CD8-positive, alpha-beta T cell (primary cell): ENCODE measurements at regions of chr5 and their contacts with region 1.

Region 1: GRCh38 chr5:150357326-150358260 is at the start of gene TCOF1:
- DNase-seq: peak; percentile 93 to 99 (median 97)
- ATAC-seq: peak; percentile 99
- H3K4me3 ChIP-seq: peak within 1 kb of the TSS; percentile 62 to 74
- H3K4me3 Mint-ChIP-seq: peak within 1 kb of the TSS; percentile 82
- H3K27ac ChIP-seq: peak within 1 kb of the TSS; percentile 52 to 70
- H3K27ac Mint-ChIP-seq: peak within 1 kb of the TSS; percentile 87
- H3K4me1 ChIP-seq: peaks cover 18% of the 10 kb centered on the region
- H3K4me1 Mint-ChIP-seq: peaks cover 46% of the 10 kb centered on the region
- H3K27me3 ChIP-seq: no peaks in the 10 kb centered on the region
- H3K27me3 Mint-ChIP-seq: no peaks in the 10 kb centered on the region
- CTCF ChIP-seq: no peak
- total RNA-seq, gene TCOF1: 36.5 to 38.7 TPM

Region 2: GRCh38 chr5:149724130-149724840 is 633.3 kb before region 1 on chr5:
- CTCF ChIA-PET with region 1: no interaction called
- POLR2A ChIA-PET with region 1: no interaction called
- intact Hi-C with region 1: loop called in 1 of 2 experiments (anchors 10 kb)
- DNase-seq: peak in 2 of 9 experiments; percentile 18 to 57
- ATAC-seq: peak; percentile 85
- H3K4me3 ChIP-seq: no peak overlapping the region
- H3K4me3 Mint-ChIP-seq: no peak overlapping the region
- H3K27ac ChIP-seq: no peak overlapping the region
- H3K27ac Mint-ChIP-seq: no peak overlapping the region
- H3K4me1 ChIP-seq: peaks cover 7% of the 10 kb centered on the region
- H3K4me1 Mint-ChIP-seq: peaks cover 9% of the 10 kb centered on the region
- H3K27me3 ChIP-seq: no peaks in the 10 kb centered on the region
- H3K27me3 Mint-ChIP-seq: peaks cover 3% of the 10 kb centered on the region
- CTCF ChIP-seq: no peak

Region 3: GRCh38 chr5:150155258-150156026 is 202.2 kb before region 1 on chr5 and contains the start of gene PDGFRB:
- CTCF ChIA-PET with region 1: no interaction called
- POLR2A ChIA-PET with region 1: no interaction called
- intact Hi-C with region 1: loop called (anchors 2 to 10 kb)
- DNase-seq: peak; percentile 30 to 81 (median 65)
- ATAC-seq: peak; percentile 88
- H3K4me3 ChIP-seq: peak within 1 kb of the TSS; percentile 44 to 59
- H3K4me3 Mint-ChIP-seq: peak within 1 kb of the TSS; percentile 90
- H3K27ac ChIP-seq: peak within 1 kb of the TSS in 1 of 2 experiments; percentile 43
- H3K27ac Mint-ChIP-seq: peak within 1 kb of the TSS; percentile 46
- H3K4me1 ChIP-seq: peaks cover 11% of the 10 kb centered on the region
- H3K4me1 Mint-ChIP-seq: peaks cover 6% of the 10 kb centered on the region
- H3K27me3 ChIP-seq: no peaks in the 10 kb centered on the region
- H3K27me3 Mint-ChIP-seq: peaks cover 6% of the 10 kb centered on the region
- CTCF ChIP-seq: no peak
- total RNA-seq, gene PDGFRB: 0.05 TPM in 1 of 2 experiments, not detected in the other

Region 4: GRCh38 chr5:150449517-150450339 is 92.1 kb after region 1 on chr5 and contains the start of gene RPS14:
- CTCF ChIA-PET with region 1: no interaction called
- POLR2A ChIA-PET with region 1: interaction called, 3 read pairs
- intact Hi-C with region 1: loop called (anchors 1 kb)
- DNase-seq: peak; percentile 90 to 97 (median 95)
- ATAC-seq: peak; percentile 92
- H3K4me3 ChIP-seq: peak within 1 kb of the TSS; percentile 77 to 89
- H3K4me3 Mint-ChIP-seq: peak within 1 kb of the TSS; percentile 100
- H3K27ac ChIP-seq: peak within 1 kb of the TSS; percentile 93 to 98
- H3K27ac Mint-ChIP-seq: peak within 1 kb of the TSS; percentile 100
- H3K4me1 ChIP-seq: peaks cover 22% of the 10 kb centered on the region
- H3K4me1 Mint-ChIP-seq: peaks cover 36% of the 10 kb centered on the region
- H3K27me3 ChIP-seq: no peaks in the 10 kb centered on the region
- H3K27me3 Mint-ChIP-seq: no peaks in the 10 kb centered on the region
- CTCF ChIP-seq: peak; percentile 84
- total RNA-seq, gene RPS14: 5,604 to 5,613 TPM

Region 5: GRCh38 chr5:150758531-150759333 is 401.1 kb after region 1 on chr5 and contains the start of gene DCTN4:
- CTCF ChIA-PET with region 1: no interaction called
- POLR2A ChIA-PET with region 1: no interaction called
- intact Hi-C with region 1: loop called in 1 of 2 experiments (anchors 5 kb)
- DNase-seq: peak; percentile 83 to 99 (median 93)
- ATAC-seq: peak; percentile 93
- H3K4me3 ChIP-seq: peak within 1 kb of the TSS; percentile 79 to 92
- H3K4me3 Mint-ChIP-seq: no peak within 1 kb of the TSS
- H3K27ac ChIP-seq: peak within 1 kb of the TSS; percentile 89 to 100
- H3K27ac Mint-ChIP-seq: no peak within 1 kb of the TSS
- H3K4me1 ChIP-seq: peaks cover 27% of the 10 kb centered on the region
- H3K4me1 Mint-ChIP-seq: peaks cover 39% of the 10 kb centered on the region
- H3K27me3 ChIP-seq: no peaks in the 10 kb centered on the region
- H3K27me3 Mint-ChIP-seq: peaks cover 2% of the 10 kb centered on the region
- CTCF ChIP-seq: no peak
- total RNA-seq, gene DCTN4: 117 to 121 TPM

Region 6: DNA sequence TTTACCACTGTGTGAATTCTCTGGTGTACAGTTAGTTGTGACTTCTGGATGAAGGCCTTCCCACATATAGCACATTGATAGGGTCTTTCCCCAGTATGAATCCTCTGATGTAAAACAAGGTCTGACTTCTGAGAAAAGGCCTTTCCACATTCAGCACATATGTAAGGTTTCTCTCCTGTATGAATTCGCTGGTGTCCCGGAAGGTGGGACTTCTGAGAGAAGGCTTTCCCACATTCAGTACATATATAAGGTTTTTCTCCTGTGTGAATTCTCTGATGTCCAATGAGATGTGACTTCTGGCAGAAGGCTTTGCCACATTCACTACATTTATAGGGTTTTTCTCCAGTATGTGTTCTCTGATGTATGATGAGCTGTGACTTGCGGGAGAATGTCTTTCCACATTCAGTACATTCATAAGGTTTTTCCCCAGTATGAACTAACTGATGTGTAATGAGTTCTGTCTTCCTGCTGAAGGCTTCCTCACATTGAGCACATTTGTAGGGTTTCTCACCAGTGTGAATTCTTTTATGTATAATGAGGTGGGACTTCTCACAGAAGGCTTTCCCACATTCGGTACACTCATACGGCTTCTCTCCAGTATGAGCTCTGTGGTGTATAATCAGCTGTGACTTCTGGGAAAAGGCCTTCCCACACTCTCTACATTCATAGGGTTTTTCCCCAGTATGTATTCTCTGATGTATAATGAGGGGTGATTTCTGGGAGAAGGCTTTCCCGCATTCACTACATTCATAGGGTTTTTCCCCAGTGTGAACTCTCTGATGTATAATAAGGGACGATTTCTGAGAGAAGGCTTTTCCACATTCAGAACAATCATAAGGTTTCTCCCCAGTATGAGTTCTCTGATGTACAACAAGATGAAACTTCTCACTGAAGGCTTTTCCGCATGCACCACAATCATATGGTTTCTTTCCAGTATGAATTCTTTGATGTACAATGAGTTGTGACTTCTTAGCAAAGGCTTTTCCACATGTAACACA is 538.1 kb after region 1 on chr5:
- CTCF ChIA-PET with region 1: no interaction called
- POLR2A ChIA-PET with region 1: no interaction called
- intact Hi-C with region 1: no loop called
- DNase-seq: no peak
- ATAC-seq: no peak
- H3K4me3 ChIP-seq: no peak overlapping the region
- H3K4me3 Mint-ChIP-seq: no peak overlapping the region
- H3K27ac ChIP-seq: no peak overlapping the region
- H3K27ac Mint-ChIP-seq: no peak overlapping the region
- H3K4me1 ChIP-seq: no peaks in the 10 kb centered on the region
- H3K4me1 Mint-ChIP-seq: no peaks in the 10 kb centered on the region
- H3K27me3 ChIP-seq: no peaks in the 10 kb centered on the region
- H3K27me3 Mint-ChIP-seq: peaks cover 2% of the 10 kb centered on the region
- CTCF ChIP-seq: no peak